Naive thymus-derived CD4-positive, alpha-beta T cell (primary cell): ENCODE measurements at regions of chr6 and their contacts with region 1.

Region 1: GRCh38 chr6:35297601-35298481 is at the start of gene DEF6:
- DNase-seq: peak; percentile 64 to 89 (median 84)
- ATAC-seq: peak; percentile 91
- H3K4me3 ChIP-seq: peak within 1 kb of the TSS; percentile 95
- H3K4me3 Mint-ChIP-seq: peak within 1 kb of the TSS; percentile 84 to 100 (median 90)
- H3K27ac ChIP-seq: peak within 1 kb of the TSS; percentile 91
- H3K27ac Mint-ChIP-seq: peak within 1 kb of the TSS; percentile 83 to 100 (median 98)
- H3K4me1 ChIP-seq: peaks cover 33 to 46% of the 10 kb centered on the region in 2 donors
- H3K4me1 Mint-ChIP-seq: peaks cover 27 to 53% (median 45%) of the 10 kb centered on the region in 7 donors
- H3K27me3 ChIP-seq: no peaks in the 10 kb centered on the region
- H3K27me3 Mint-ChIP-seq: no peaks in the 10 kb centered on the region
- total RNA-seq, gene DEF6: 219 to 250 (median 225) TPM

Region 2: GRCh38 chr6:35230950-35231349 is 66.9 kb before region 1 on chr6:
- CTCF ChIA-PET with region 1: no interaction called
- POLR2A ChIA-PET with region 1: no interaction called
- intact Hi-C with region 1: no loop called
- DNase-seq: no peak
- ATAC-seq: no peak
- H3K4me3 ChIP-seq: no peak overlapping the region
- H3K4me3 Mint-ChIP-seq: no peak overlapping the region
- H3K27ac ChIP-seq: no peak overlapping the region
- H3K27ac Mint-ChIP-seq: no peak overlapping the region
- H3K4me1 ChIP-seq: no peaks in the 10 kb centered on the region
- H3K4me1 Mint-ChIP-seq: peaks cover 0 to 6% (median 0%) of the 10 kb centered on the region in 7 donors
- H3K27me3 ChIP-seq: no peaks in the 10 kb centered on the region
- H3K27me3 Mint-ChIP-seq: peaks cover 0 to under 1% (median 0%) of the 10 kb centered on the region in 5 donors

Region 3: GRCh38 chr6:35311390-35312075 is 13.7 kb after region 1 on chr6:
- CTCF ChIA-PET with region 1: interaction called, 111 read pairs
- POLR2A ChIA-PET with region 1: interaction called, 318 read pairs
- intact Hi-C with region 1: loop called (anchors 1 kb)
- DNase-seq: peak in 8 of 9 donors; percentile 50 to 80 (median 73)
- ATAC-seq: peak; percentile 85
- H3K4me3 ChIP-seq: peak overlapping the region; percentile 46
- H3K4me3 Mint-ChIP-seq: peak overlapping the region; percentile 79 to 89 (median 86)
- H3K27ac ChIP-seq: peak overlapping the region; percentile 84
- H3K27ac Mint-ChIP-seq: peak overlapping the region; percentile 93 to 100 (median 99)
- H3K4me1 ChIP-seq: peaks cover 63 to 81% of the 10 kb centered on the region in 2 donors
- H3K4me1 Mint-ChIP-seq: peaks cover 69 to 98% (median 94%) of the 10 kb centered on the region in 7 donors
- H3K27me3 ChIP-seq: no peaks in the 10 kb centered on the region
- H3K27me3 Mint-ChIP-seq: no peaks in the 10 kb centered on the region

Region 4: DNA sequence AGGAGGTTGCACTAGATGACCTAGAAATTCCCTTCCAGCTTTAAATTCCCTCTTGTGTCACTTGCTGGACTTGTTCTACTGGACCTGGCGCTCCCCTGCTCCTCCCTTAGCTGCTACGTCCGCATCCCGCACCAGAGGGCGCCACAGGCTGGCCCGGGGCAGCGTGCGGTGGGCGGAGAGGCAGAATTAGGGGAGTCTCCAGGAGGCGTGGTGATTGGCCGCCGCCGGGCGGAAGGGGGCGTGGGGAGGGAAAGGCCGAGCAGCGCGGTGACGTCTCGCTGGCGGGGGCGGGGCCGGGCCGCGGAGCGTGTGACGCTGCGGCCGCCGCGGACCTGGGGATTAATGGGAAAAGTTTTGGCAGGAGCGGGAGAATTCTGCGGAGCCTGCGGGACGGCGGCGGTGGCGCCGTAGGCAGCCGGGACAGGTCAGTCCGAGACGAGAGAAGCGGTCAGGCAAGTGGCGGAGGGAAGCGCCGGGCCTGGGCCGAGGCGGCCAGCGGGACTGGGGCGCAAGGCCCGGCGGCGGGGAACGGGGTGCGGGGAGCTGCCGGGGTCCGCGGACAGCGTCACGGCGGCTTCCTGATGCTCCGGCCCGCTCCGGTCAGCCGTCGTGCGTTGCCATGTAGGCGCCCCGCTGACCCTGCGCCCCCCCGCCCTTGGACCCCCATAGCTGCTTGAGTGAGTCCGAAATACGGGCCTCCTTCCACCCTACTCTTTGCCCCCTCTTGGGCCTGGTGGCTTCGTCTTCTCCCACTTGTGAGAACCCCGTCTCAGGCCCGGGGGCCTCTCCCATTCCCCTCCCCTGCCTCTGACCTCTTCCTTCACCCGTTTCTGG is 44.6 kb after region 1 on chr6 and contains the start of gene PPARD:
- CTCF ChIA-PET with region 1: interaction called, 12 read pairs
- POLR2A ChIA-PET with region 1: interaction called, 7 read pairs
- intact Hi-C with region 1: loop called (anchors 1 kb)
- DNase-seq: peak; percentile 92 to 100 (median 96)
- ATAC-seq: peak; percentile 100
- H3K4me3 ChIP-seq: peak within 1 kb of the TSS; percentile 70
- H3K4me3 Mint-ChIP-seq: peak within 1 kb of the TSS; percentile 88 to 100 (median 98)
- H3K27ac ChIP-seq: peak within 1 kb of the TSS; percentile 97
- H3K27ac Mint-ChIP-seq: peak within 1 kb of the TSS; percentile 88 to 98 (median 97)
- H3K4me1 ChIP-seq: peaks cover 19 to 35% of the 10 kb centered on the region in 2 donors
- H3K4me1 Mint-ChIP-seq: peaks cover 38 to 55% (median 49%) of the 10 kb centered on the region in 7 donors
- H3K27me3 ChIP-seq: no peaks in the 10 kb centered on the region
- H3K27me3 Mint-ChIP-seq: peaks cover 0 to 3% (median 0%) of the 10 kb centered on the region in 5 donors
- total RNA-seq, gene PPARD: 29.3 to 47.1 (median 36.0) TPM

Region 5: GRCh38 chr6:35468181-35468979 is 170.5 kb after region 1 on chr6 and contains the start of gene RPL10A:
- CTCF ChIA-PET with region 1: interaction called, 23 read pairs
- POLR2A ChIA-PET with region 1: interaction called, 19 read pairs
- intact Hi-C with region 1: loop called (anchors 1 kb)
- DNase-seq: peak; percentile 87 to 97 (median 94)
- ATAC-seq: peak; percentile 96
- H3K4me3 ChIP-seq: peak within 1 kb of the TSS; percentile 91
- H3K4me3 Mint-ChIP-seq: peak within 1 kb of the TSS; percentile 85 to 99 (median 98)
- H3K27ac ChIP-seq: peak within 1 kb of the TSS; percentile 83
- H3K27ac Mint-ChIP-seq: peak within 1 kb of the TSS; percentile 94 to 100 (median 99)
- H3K4me1 ChIP-seq: peaks cover 11 to 27% of the 10 kb centered on the region in 2 donors
- H3K4me1 Mint-ChIP-seq: peaks cover 25 to 49% (median 35%) of the 10 kb centered on the region in 7 donors
- H3K27me3 ChIP-seq: no peaks in the 10 kb centered on the region
- H3K27me3 Mint-ChIP-seq: no peaks in the 10 kb centered on the region
- total RNA-seq, gene RPL10A: 1,380 to 2,381 (median 2,302) TPM

Region 6: GRCh38 chr6:35583893-35584688 is 286.2 kb after region 1 on chr6:
- CTCF ChIA-PET with region 1: no interaction called
- POLR2A ChIA-PET with region 1: no interaction called
- intact Hi-C with region 1: loop called in 1 of 2 experiments (anchors 1 kb)
- DNase-seq: peak; percentile 43 to 81 (median 75)
- ATAC-seq: peak; percentile 84
- H3K4me3 ChIP-seq: no peak overlapping the region
- H3K4me3 Mint-ChIP-seq: peak overlapping the region in 8 of 10 donors; percentile 16 to 62 (median 46)
- H3K27ac ChIP-seq: peak overlapping the region; percentile 16
- H3K27ac Mint-ChIP-seq: peak overlapping the region; percentile 38 to 94 (median 92)
- H3K4me1 ChIP-seq: peaks cover 7 to 57% of the 10 kb centered on the region in 2 donors
- H3K4me1 Mint-ChIP-seq: peaks cover 31 to 92% (median 79%) of the 10 kb centered on the region in 7 donors
- H3K27me3 ChIP-seq: no peaks in the 10 kb centered on the region
- H3K27me3 Mint-ChIP-seq: no peaks in the 10 kb centered on the region

Region 7: GRCh38 chr6:36368921-36369865 is 1071.4 kb after region 1 on chr6:
- CTCF ChIA-PET with region 1: no interaction called
- POLR2A ChIA-PET with region 1: no interaction called
- intact Hi-C with region 1: no loop called
- DNase-seq: no peak
- ATAC-seq: peak; percentile 82
- H3K4me3 ChIP-seq: no peak overlapping the region
- H3K4me3 Mint-ChIP-seq: no peak overlapping the region
- H3K27ac ChIP-seq: no peak overlapping the region
- H3K27ac Mint-ChIP-seq: no peak overlapping the region
- H3K4me1 ChIP-seq: no peaks in the 10 kb centered on the region
- H3K4me1 Mint-ChIP-seq: peaks cover 0 to 8% (median 0%) of the 10 kb centered on the region in 7 donors
- H3K27me3 ChIP-seq: no peaks in the 10 kb centered on the region
- H3K27me3 Mint-ChIP-seq: no peaks in the 10 kb centered on the region